HepG2 (cell line): ENCODE measurements at regions of chr1 and their contacts with region 1.

Region 1: GRCh38 chr1:15152318-15153183 is 996 bp upstream of the TMEM51 start:
- DNase-seq: peak; percentile 88
- ATAC-seq: peak; percentile 55
- H3K4me3 ChIP-seq: peak overlapping the region; percentile 69 to 83 (median 70)
- H3K27ac ChIP-seq: peak overlapping the region; percentile 69
- H3K4me1 ChIP-seq: peaks cover 79% of the 10 kb centered on the region
- H3K27me3 ChIP-seq: no peaks in the 10 kb centered on the region
- CTCF ChIP-seq: peak; percentile 82
- EP300 ChIP-seq: peak in 1 of 2 experiments; percentile 46; a peak in 3 of 4 replicates
- POLR2A ChIP-seq: peak; percentile 28 to 37; a peak in 2 of 4 replicates
- RAD21 ChIP-seq: peak; percentile 37; the same call in 1 of the 2 replicates

Region 2: GRCh38 chr1:15038232-15039016 is 114.1 kb before region 1 on chr1:
- CTCF ChIA-PET with region 1: no interaction called
- POLR2A ChIA-PET with region 1: no interaction called
- in situ Hi-C with region 1: no loop called
- intact Hi-C with region 1: no loop called
- DNase-seq: peak; percentile 61
- ATAC-seq: peak; percentile 74
- H3K4me3 ChIP-seq: no peak overlapping the region
- H3K27ac ChIP-seq: no peak overlapping the region
- H3K4me1 ChIP-seq: no peaks in the 10 kb centered on the region
- H3K27me3 ChIP-seq: no peaks in the 10 kb centered on the region
- CTCF ChIP-seq: peak; percentile 56
- EP300 ChIP-seq: no peak
- POLR2A ChIP-seq: no peak
- RAD21 ChIP-seq: no peak

Region 3: GRCh38 chr1:15128520-15129313 is 23.8 kb before region 1 on chr1:
- CTCF ChIA-PET with region 1: interaction called, 10 read pairs
- POLR2A ChIA-PET with region 1: interaction called, 5 read pairs
- in situ Hi-C with region 1: no loop called
- intact Hi-C with region 1: loop called (anchors 2 kb)
- DNase-seq: peak; percentile 59
- ATAC-seq: peak; percentile 99
- H3K4me3 ChIP-seq: no peak overlapping the region
- H3K27ac ChIP-seq: no peak overlapping the region
- H3K4me1 ChIP-seq: no peaks in the 10 kb centered on the region
- H3K27me3 ChIP-seq: no peaks in the 10 kb centered on the region
- CTCF ChIP-seq: peak; percentile 95
- EP300 ChIP-seq: no peak
- POLR2A ChIP-seq: no peak
- RAD21 ChIP-seq: peak; percentile 95

Region 4: GRCh38 chr1:15172405-15173259 is 20.1 kb after region 1 on chr1:
- CTCF ChIA-PET with region 1: no interaction called
- POLR2A ChIA-PET with region 1: interaction called, 33 read pairs
- in situ Hi-C with region 1: no loop called
- intact Hi-C with region 1: no loop called
- DNase-seq: peak; percentile 80
- ATAC-seq: peak; percentile 78
- H3K4me3 ChIP-seq: peak overlapping the region in 1 of 3 experiments; percentile 28; a peak in 1 of 6 replicates
- H3K27ac ChIP-seq: peak overlapping the region; percentile 58
- H3K4me1 ChIP-seq: peaks cover 74% of the 10 kb centered on the region
- H3K27me3 ChIP-seq: no peaks in the 10 kb centered on the region
- CTCF ChIP-seq: peak; percentile 12; the same call in 1 of the 2 replicates
- EP300 ChIP-seq: no peak
- POLR2A ChIP-seq: no peak
- RAD21 ChIP-seq: no peak

Region 5: DNA sequence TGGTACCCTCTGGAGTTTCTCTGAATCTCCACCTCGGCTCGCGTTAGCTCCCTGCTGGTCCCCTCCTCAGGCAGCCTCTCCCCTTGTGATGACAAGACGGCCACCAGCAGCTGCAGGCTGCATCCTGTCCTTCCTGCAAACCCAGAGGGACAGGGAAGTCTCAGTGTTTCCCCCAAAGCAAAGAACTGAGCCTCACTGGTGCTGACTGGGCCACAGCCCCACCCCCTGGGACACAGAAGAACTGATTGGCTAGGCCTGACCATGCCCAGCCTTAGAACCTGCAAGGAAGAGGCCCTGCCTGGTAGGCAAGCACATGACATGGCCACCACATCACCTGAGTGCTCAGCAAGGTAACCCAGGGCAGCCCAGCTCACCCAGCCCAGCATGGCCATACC is 35.6 kb after region 1 on chr1:
- CTCF ChIA-PET with region 1: no interaction called
- POLR2A ChIA-PET with region 1: interaction called, 26 read pairs
- in situ Hi-C with region 1: no loop called
- intact Hi-C with region 1: loop called (anchors 5 kb)
- DNase-seq: no peak
- ATAC-seq: no peak
- H3K4me3 ChIP-seq: no peak overlapping the region
- H3K27ac ChIP-seq: peak overlapping the region; percentile 4
- H3K4me1 ChIP-seq: peaks cover 90% of the 10 kb centered on the region
- H3K27me3 ChIP-seq: no peaks in the 10 kb centered on the region
- CTCF ChIP-seq: no peak
- EP300 ChIP-seq: no peak
- POLR2A ChIP-seq: no peak
- RAD21 ChIP-seq: no peak

Region 6: GRCh38 chr1:15272009-15272788 is 119.6 kb after region 1 on chr1:
- CTCF ChIA-PET with region 1: interaction called, 18 read pairs
- POLR2A ChIA-PET with region 1: interaction called, 7 read pairs
- in situ Hi-C with region 1: no loop called
- intact Hi-C with region 1: loop called (anchors 1 kb)
- DNase-seq: peak; percentile 82
- ATAC-seq: peak; percentile 98
- H3K4me3 ChIP-seq: peak overlapping the region in 1 of 3 experiments; percentile 38; a peak in 2 of 6 replicates
- H3K27ac ChIP-seq: no peak overlapping the region
- H3K4me1 ChIP-seq: peaks cover 21% of the 10 kb centered on the region
- H3K27me3 ChIP-seq: peaks cover 2 to 10% of the 10 kb centered on the region in 2 experiments; a peak in 2 of 5 replicates
- CTCF ChIP-seq: peak; percentile 94
- EP300 ChIP-seq: no peak
- POLR2A ChIP-seq: no peak
- RAD21 ChIP-seq: peak; percentile 92

Region 7: GRCh38 chr1:15345711-15346355 is 193.3 kb after region 1 on chr1:
- CTCF ChIA-PET with region 1: no interaction called
- POLR2A ChIA-PET with region 1: no interaction called
- in situ Hi-C with region 1: no loop called
- intact Hi-C with region 1: no loop called
- DNase-seq: no peak
- ATAC-seq: no peak
- H3K4me3 ChIP-seq: no peak overlapping the region
- H3K27ac ChIP-seq: no peak overlapping the region
- H3K4me1 ChIP-seq: peaks cover 31% of the 10 kb centered on the region
- H3K27me3 ChIP-seq: peaks cover 0 to 21% of the 10 kb centered on the region in 2 experiments; a peak in 4 of 5 replicates
- CTCF ChIP-seq: no peak
- EP300 ChIP-seq: no peak
- POLR2A ChIP-seq: no peak
- RAD21 ChIP-seq: no peak

Region 8: GRCh38 chr1:15485636-15486035 is 333.1 kb after region 1 on chr1:
- CTCF ChIA-PET with region 1: no interaction called
- POLR2A ChIA-PET with region 1: no interaction called
- in situ Hi-C with region 1: no loop called
- intact Hi-C with region 1: no loop called
- DNase-seq: no peak
- ATAC-seq: no peak
- H3K4me3 ChIP-seq: no peak overlapping the region
- H3K27ac ChIP-seq: no peak overlapping the region
- H3K4me1 ChIP-seq: no peaks in the 10 kb centered on the region
- H3K27me3 ChIP-seq: 0 out of 5 replicates have a peak, but pooled peaks cover 0 to 1% of the 10 kb centered on the region in 2 experiments
- CTCF ChIP-seq: no peak
- EP300 ChIP-seq: no peak
- POLR2A ChIP-seq: no peak
- RAD21 ChIP-seq: no peak